Endothelial cell of umbilical vein (primary cell): ENCODE measurements at regions of chr18 and their contacts with region 1.

Region 1: GRCh38 chr18:33231474-33232317 is 208.8 kb downstream of the CCDC178 start:
- DNase-seq: peak; percentile 71
- H3K4me3 ChIP-seq: no peak overlapping the region
- H3K27ac ChIP-seq: no peak overlapping the region
- H3K4me1 ChIP-seq: peaks cover 2% of the 10 kb centered on the region
- H3K27me3 ChIP-seq: peaks cover 0 to 2% of the 10 kb centered on the region in 2 experiments
- CTCF ChIP-seq: peak; percentile 82 to 86
- POLR2A ChIP-seq: no peak

Region 2: GRCh38 chr18:32893915-32894314 is 337.8 kb before region 1 on chr18:
- CTCF ChIA-PET with region 1: interaction called, 11 read pairs
- POLR2A ChIA-PET with region 1: no interaction called
- dilution Hi-C with region 1: no loop called
- intact Hi-C with region 1: no loop called
- DNase-seq: no peak
- H3K4me3 ChIP-seq: no peak overlapping the region
- H3K27ac ChIP-seq: no peak overlapping the region
- H3K4me1 ChIP-seq: no peaks in the 10 kb centered on the region
- H3K27me3 ChIP-seq: no peaks in the 10 kb centered on the region
- CTCF ChIP-seq: peak in 1 of 2 donors; percentile 11
- POLR2A ChIP-seq: no peak

Region 3: DNA sequence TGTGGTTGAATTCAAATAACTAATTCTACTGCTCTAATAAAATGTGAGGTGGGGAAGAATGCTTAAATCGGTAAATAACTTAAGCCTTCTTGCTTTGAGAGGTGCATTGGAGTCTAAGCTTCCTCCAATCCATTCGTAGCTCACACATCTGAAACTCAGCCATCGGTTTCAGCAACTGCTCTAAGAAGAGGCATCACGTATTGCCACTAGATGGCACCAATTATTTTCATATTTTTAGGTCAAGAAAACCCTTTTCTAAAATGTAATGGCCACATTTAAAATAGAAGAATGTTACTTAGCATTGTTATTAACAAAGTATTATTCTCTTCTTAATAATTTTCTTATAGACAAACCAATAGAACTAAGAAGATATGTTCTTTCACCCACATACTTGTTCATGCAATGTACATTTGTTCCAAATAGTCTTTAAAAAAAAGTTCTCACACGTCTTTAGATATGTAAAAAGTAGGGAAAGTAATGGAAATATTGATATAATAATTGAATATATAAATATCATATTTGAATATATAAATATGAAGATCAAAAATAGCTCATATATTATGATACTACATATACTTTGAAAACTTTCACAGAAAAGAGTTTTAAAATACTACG is 21.0 kb before region 1 on chr18:
- CTCF ChIA-PET with region 1: interaction called, 53 read pairs
- POLR2A ChIA-PET with region 1: no interaction called
- dilution Hi-C with region 1: no loop called
- intact Hi-C with region 1: no loop called
- DNase-seq: peak; percentile 36
- H3K4me3 ChIP-seq: no peak overlapping the region
- H3K27ac ChIP-seq: no peak overlapping the region
- H3K4me1 ChIP-seq: no peaks in the 10 kb centered on the region
- H3K27me3 ChIP-seq: no peaks in the 10 kb centered on the region
- CTCF ChIP-seq: peak; percentile 46 to 58
- POLR2A ChIP-seq: no peak

Region 4: GRCh38 chr18:33495278-33495677 is 263.6 kb after region 1 on chr18:
- CTCF ChIA-PET with region 1: interaction called, 17 read pairs
- POLR2A ChIA-PET with region 1: no interaction called
- dilution Hi-C with region 1: no loop called
- intact Hi-C with region 1: loop called (anchors 1 kb)
- DNase-seq: peak; percentile 10
- H3K4me3 ChIP-seq: no peak overlapping the region
- H3K27ac ChIP-seq: no peak overlapping the region
- H3K4me1 ChIP-seq: no peaks in the 10 kb centered on the region
- H3K27me3 ChIP-seq: peaks cover 0 to 3% of the 10 kb centered on the region in 2 experiments
- CTCF ChIP-seq: peak; percentile 15 to 36
- POLR2A ChIP-seq: no peak

Region 5: GRCh38 chr18:33761363-33761762 is 529.7 kb after region 1 on chr18:
- CTCF ChIA-PET with region 1: interaction called, 58 read pairs
- POLR2A ChIA-PET with region 1: no interaction called
- dilution Hi-C with region 1: no loop called
- intact Hi-C with region 1: loop called (anchors 1 kb)
- DNase-seq: peak; percentile 26
- H3K4me3 ChIP-seq: no peak overlapping the region
- H3K27ac ChIP-seq: no peak overlapping the region
- H3K4me1 ChIP-seq: no peaks in the 10 kb centered on the region
- H3K27me3 ChIP-seq: peaks cover 0 to 3% of the 10 kb centered on the region in 2 experiments
- CTCF ChIP-seq: peak in 1 of 2 donors; percentile 9
- POLR2A ChIP-seq: no peak